Activated CD4-positive, alpha-beta memory T cell treated with anti-CD3 and anti-CD28 coated beads for 36 hours (primary cell): ENCODE measurements at regions of chr9 and their contacts with region 1.

Region 1: DNA sequence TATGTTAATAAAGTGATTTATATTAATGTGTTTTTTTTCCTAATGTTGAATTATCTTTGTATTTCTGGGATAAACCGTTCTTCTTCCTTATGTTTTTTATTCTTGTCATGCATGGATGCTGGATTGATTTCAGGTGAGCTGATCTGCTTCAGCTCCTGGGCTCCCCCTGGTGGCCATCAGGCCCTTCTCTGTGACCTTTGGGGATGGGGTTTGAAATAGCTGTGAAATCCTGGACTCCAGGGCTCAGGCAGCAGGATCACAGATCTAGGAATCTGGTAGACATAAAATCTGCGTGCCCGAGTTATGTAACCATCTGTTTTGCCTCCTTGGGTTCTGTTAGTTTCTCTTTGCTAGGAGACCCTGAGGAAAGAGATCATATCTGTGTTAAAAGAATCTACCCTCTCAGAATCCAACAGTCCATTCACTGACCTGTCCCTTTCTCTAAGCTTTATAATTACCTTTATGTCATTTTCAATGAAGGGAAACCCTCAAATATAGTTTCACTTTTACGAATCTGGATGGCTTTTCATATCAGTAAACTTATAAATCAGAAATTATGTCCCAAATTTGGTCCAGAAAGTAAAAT is 12.2 kb upstream of the OR13J1 start:
- DNase-seq: peak; percentile 84
- H3K4me3 Mint-ChIP-seq: no peak overlapping the region
- H3K27ac Mint-ChIP-seq: no peak overlapping the region
- H3K4me1 Mint-ChIP-seq: no peaks in the 10 kb centered on the region
- H3K27me3 Mint-ChIP-seq: no peaks in the 10 kb centered on the region

Region 2: DNA sequence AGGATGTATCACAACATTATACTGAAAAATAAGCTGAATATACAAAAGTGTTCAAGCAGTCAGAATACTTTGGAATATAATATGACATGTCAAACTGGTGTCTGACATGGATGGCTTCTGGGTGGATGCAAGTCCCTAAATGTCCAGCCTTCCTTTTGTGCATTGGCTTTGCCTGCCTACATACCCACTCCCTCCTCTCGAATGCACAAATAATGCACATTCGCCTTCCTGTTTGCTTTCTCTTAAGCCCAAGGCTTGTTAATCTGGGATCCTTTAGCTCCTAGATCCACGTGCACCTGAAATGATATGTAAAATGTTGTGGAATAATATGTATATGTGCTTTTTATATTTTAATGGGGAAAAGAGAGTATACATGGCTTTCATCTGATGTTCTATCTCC is 103.9 kb before region 1 on chr9:
- CTCF ChIA-PET with region 1: interaction called, 11 read pairs
- POLR2A ChIA-PET with region 1: no interaction called
- intact Hi-C with region 1: no loop called
- DNase-seq: no peak
- H3K4me3 Mint-ChIP-seq: no peak overlapping the region
- H3K27ac Mint-ChIP-seq: no peak overlapping the region
- H3K4me1 Mint-ChIP-seq: no peaks in the 10 kb centered on the region
- H3K27me3 Mint-ChIP-seq: no peaks in the 10 kb centered on the region

Region 3: DNA sequence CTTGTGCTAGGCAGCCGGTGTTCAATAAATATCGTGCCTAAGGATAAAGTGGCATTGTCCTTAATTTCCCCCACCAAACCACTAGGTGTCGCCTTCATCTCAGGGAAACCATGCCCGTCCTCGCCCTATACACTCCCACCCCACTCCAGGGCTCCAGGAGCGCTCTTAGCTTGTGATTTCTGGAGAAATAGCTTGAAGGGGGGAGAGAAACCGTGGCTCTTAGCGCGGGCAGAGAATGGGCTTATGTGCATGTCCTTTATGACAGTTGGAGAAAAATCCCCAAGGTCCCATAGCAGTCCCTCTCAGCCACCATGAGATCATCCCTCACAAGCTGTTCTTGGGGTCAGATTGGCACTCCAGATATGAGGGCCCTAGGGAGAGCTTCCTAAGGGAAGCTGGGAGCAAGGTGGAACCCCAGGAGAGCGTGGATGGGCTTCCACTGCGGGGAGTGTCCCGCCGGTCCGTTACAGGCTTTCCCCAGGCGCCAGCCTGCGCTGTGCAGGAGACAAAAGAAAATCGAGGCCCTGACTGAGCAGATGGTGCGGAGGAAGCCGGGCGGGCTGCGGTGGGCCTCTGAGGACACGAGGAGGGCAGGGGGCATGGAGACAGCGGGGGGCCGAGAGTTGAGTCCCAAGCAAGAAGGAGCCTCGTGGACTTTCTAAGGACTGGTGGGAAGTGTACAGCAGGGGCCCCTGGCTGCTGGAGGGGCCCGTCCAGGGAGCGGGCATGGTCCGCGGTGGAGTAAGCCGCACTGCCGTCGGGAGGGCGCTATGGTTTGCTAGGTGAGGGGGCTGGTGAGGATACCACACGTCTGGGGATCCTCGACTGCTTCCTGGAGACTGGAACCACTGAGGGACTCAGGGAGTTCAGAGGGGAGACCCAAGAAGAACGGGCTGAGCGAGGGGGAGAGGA is 91.7 kb before region 1 on chr9:
- CTCF ChIA-PET with region 1: interaction called, 66 read pairs
- POLR2A ChIA-PET with region 1: interaction called, 3 read pairs
- intact Hi-C with region 1: loop called (anchors 1 kb)
- DNase-seq: peak; percentile 60
- H3K4me3 Mint-ChIP-seq: no peak overlapping the region
- H3K27ac Mint-ChIP-seq: no peak overlapping the region
- H3K4me1 Mint-ChIP-seq: peaks cover 5% of the 10 kb centered on the region
- H3K27me3 Mint-ChIP-seq: no peaks in the 10 kb centered on the region

Region 4: DNA sequence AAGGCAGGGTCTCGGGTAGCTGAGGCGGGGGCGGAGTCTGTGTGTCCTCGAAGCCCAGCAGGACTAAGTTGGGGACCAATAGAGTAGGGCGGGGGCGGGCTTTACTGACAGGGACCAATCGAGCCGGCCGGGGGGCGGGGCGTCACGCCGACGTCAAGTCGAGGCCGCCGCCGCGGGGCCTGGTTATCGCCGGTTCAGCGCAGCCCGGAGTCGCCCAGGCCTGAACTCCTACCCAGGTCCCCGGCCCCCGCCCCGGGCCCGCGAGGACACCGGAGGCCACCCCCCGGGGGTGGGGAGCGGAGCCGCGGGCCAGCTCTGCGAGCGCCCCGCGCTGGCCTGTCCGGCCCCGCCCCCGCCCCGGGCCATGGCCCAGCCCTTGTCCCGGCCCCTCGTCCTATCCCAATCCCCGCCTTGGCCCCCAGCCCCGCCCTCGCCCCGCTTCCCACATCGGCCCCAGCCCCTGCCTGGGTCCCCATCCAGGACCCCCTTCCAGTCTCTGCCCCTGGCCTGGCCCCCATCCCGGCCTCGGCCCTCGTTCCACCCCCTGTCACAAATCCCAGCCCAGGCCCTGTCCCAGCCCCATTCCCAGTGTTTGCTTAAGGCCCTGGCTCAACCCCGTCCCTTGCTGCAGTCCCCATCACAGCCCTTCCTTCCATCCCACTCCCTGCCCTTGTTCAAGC is 53.1 kb before region 1 on chr9 and contains the start of gene TMEM8B:
- CTCF ChIA-PET with region 1: interaction called, 49 read pairs
- POLR2A ChIA-PET with region 1: no interaction called
- intact Hi-C with region 1: loop called (anchors 1 kb)
- DNase-seq: peak; percentile 96
- H3K4me3 Mint-ChIP-seq: peak within 1 kb of the TSS; percentile 91
- H3K27ac Mint-ChIP-seq: peak within 1 kb of the TSS; percentile 60
- H3K4me1 Mint-ChIP-seq: peaks cover 23% of the 10 kb centered on the region
- H3K27me3 Mint-ChIP-seq: no peaks in the 10 kb centered on the region
- total RNA-seq, gene TMEM8B: 5.9 to 6.0 TPM

Region 5: GRCh38 chr9:35863583-35863982 is 18.8 kb before region 1 on chr9:
- CTCF ChIA-PET with region 1: interaction called, 19 read pairs
- POLR2A ChIA-PET with region 1: no interaction called
- intact Hi-C with region 1: no loop called
- DNase-seq: no peak
- H3K4me3 Mint-ChIP-seq: no peak overlapping the region
- H3K27ac Mint-ChIP-seq: no peak overlapping the region
- H3K4me1 Mint-ChIP-seq: no peaks in the 10 kb centered on the region
- H3K27me3 Mint-ChIP-seq: peaks cover 15% of the 10 kb centered on the region

Region 6: DNA sequence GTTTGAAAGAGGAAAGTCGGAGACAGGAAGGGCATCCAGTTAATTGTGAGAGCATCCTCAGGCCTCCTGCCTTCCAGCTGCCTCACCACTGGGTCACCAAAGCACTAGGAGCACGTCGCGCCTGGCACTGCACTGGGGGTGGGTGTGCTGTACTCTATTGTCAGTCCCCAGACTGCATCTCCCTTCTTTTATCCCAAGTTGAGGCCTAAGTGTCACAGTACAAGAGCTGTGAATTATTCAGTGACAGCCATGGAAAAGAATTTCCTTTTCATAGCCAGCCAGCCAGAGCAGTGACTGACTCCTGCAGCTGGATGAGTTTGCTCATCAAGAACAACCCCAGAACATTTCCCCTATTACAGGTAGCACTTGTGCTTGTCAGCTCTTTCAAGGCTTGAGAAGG is 324.7 kb after region 1 on chr9:
- CTCF ChIA-PET with region 1: no interaction called
- POLR2A ChIA-PET with region 1: no interaction called
- intact Hi-C with region 1: no loop called
- DNase-seq: no peak
- H3K4me3 Mint-ChIP-seq: no peak overlapping the region
- H3K27ac Mint-ChIP-seq: peak overlapping the region; percentile 94
- H3K4me1 Mint-ChIP-seq: peaks cover 57% of the 10 kb centered on the region
- H3K27me3 Mint-ChIP-seq: no peaks in the 10 kb centered on the region